H1 (cell line): ENCODE measurements at regions of chr22 and their contacts with region 1.

Region 1: DNA sequence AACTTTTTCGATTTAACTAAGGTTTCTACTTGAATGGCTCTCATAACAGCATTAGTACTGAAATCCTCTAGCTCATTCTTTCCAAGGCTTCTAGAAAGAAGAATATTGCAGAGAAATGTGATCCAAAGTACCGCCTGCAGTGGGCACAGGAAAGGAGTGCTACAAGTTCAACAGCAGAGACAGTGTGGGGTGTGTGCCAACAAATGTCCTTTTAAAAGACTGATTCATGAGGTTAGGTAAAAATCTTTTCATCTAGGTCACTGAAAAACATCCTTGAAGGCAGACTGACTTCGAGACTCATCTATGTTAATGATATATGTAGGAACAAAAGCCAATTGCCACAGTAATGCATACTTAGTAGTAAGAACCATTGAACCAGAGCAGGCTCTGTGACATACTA is 349.1 kb upstream of the PITPNB start:
- DNase-seq: no peak
- H3K4me3 ChIP-seq: no peak overlapping the region
- H3K27ac ChIP-seq: no peak overlapping the region
- H3K4me1 ChIP-seq: 0 out of 7 replicates have a peak, but pooled peaks cover 0 to 2% (median 0%) of the 10 kb centered on the region in 4 experiments
- H3K27me3 ChIP-seq: no peaks in the 10 kb centered on the region
- CTCF ChIP-seq: no peak
- EP300 ChIP-seq: no peak
- POLR2A ChIP-seq: no peak
- RAD21 ChIP-seq: no peak

Region 2: GRCh38 chr22:28058036-28058435 is 210.1 kb before region 1 on chr22:
- CTCF ChIA-PET with region 1: interaction called, 10 read pairs
- POLR2A ChIA-PET with region 1: no interaction called
- DNase-seq: no peak
- H3K4me3 ChIP-seq: no peak overlapping the region
- H3K27ac ChIP-seq: no peak overlapping the region
- H3K4me1 ChIP-seq: peaks cover 0 to 1% (median 0%) of the 10 kb centered on the region in 4 experiments; a peak in 1 of 7 replicates
- H3K27me3 ChIP-seq: no peaks in the 10 kb centered on the region
- CTCF ChIP-seq: no peak
- EP300 ChIP-seq: no peak
- POLR2A ChIP-seq: no peak
- RAD21 ChIP-seq: no peak

Region 3: DNA sequence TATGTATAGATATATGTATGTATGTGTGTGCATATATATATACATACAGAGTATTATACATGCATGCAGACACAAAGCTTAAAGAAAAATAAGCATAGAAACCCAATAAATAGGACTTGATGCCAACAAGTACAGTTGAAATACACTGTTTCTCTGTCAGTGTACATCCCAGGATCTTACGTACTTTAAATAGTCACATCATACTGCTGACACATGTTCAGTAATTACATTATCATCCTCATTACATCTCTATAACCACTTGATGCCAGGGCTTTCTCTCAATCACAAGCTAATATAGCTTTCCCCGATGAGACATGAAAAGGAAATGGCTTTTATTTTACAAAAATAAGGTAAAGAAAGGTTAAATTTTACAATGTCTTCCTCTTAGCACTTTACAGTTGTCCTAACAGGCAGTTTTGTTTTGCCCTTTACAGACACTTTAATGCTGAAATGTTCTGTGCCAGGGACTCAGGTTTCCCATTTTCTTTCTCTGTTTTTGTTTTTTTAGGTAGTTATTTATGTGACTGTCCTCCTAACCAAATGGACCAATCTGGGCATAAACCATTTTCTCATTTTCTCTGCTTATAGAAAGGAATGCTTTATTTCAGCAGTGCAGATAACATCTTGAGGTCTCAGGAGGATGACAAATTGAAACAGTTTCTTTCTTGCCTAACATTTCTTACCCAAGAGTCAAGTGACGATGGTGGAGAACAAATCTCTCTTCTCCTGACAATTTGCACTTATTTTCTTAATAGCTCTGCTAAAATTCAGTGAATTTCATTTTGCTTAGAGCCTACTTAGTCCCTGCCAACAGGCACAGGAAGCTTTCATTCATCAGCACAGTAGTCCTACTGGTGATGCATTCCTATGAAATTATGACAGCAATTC is 61.3 kb after region 1 on chr22:
- CTCF ChIA-PET with region 1: no interaction called
- POLR2A ChIA-PET with region 1: no interaction called
- DNase-seq: no peak
- H3K4me3 ChIP-seq: no peak overlapping the region
- H3K27ac ChIP-seq: no peak overlapping the region
- H3K4me1 ChIP-seq: no peaks in the 10 kb centered on the region; a peak in 2 of 7 replicates
- H3K27me3 ChIP-seq: no peaks in the 10 kb centered on the region
- CTCF ChIP-seq: no peak
- EP300 ChIP-seq: no peak
- POLR2A ChIP-seq: no peak
- RAD21 ChIP-seq: no peak